Activated naive CD4-positive, alpha-beta T cell treated with anti-CD3 and anti-CD28 coated beads for 36 hours (primary cell): ENCODE measurements at regions of chr11 and their contacts with region 1.

Region 1: DNA sequence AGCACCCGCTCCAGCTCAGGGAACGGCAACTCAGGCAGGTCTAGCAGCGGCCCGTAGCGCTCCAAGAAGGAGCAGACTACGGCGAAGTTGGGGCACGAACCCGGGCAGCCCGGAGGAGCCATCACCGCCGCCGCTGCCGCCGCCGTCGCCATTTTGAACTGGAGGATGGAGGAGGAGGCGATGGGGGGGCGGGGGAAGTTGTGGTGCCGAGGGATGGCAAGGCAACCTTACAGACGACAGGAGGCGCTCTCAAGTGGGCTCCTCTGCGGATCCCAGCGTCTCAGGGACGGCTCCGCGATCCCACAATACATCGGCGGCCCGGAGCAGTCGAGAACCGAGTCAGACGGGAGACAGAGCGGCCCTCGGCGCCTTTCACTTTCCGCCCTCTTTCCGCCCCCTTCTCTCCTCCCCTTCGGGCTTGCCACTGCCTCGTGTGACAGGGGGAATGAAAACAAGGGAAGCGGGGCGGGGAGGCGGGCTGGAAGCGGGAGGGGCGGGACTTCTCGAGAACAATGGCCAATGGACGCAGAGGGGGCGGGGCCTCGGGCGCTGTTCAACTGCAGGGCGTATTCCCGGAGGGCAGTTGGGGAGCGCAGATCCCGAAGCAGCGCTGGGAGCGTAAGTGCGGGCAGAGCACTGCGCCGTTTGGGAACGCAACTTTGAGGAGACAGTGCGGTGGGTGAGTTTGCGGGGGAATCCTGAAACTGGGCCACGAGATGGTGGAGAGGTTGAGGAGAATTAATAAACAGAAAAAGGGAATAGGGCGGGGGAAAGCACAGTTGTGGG is at the starts of genes AAMDC and RSF1:
- DNase-seq: peak; percentile 98
- H3K4me3 Mint-ChIP-seq: peak within 1 kb of the TSS; percentile 98
- H3K27ac Mint-ChIP-seq: peak within 1 kb of the TSS; percentile 97
- H3K4me1 Mint-ChIP-seq: peaks cover 36% of the 10 kb centered on the region
- H3K27me3 Mint-ChIP-seq: no peaks in the 10 kb centered on the region
- total RNA-seq, gene AAMDC: 6.0 to 6.4 TPM
- total RNA-seq, gene RSF1: 50.3 to 54.2 TPM

Region 2: DNA sequence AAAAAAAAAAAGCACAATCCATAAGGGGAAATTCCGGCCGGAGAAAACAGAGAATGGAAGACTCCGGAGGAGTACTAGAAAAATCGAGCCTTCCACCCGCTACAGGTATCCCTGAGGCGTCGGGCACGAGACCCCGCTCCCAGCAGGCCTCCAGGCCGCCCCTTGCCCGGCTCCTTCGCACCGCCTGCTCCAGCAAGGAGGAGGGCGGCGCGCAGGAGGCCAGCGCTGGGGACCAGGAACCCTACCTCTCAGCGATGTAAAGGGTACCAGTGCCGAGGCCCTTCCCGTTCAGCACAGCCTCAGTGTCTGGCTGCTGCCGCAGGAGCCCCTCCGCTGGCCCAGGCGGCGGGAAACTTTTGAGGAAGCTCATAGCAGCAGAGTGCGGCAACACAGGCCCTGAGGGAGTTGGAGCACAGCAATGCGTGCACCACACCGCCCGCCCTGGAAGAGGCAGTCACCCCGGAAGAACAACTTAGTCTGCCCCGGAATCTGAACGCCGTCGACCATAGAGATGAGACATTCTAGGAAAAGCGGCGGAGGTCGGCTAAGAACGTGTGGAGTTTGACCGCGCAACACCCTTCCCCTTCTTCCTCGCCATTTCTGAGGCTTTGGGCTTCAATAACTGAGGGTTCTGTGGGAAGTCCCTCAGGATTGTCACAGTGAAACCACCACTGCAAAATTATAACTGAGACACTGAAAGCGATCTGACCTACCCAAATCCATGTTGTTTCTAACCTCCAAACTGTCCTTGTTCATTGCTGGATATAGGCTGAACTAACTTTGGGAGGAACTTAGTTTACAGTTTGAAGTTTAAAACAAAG is 183.2 kb before region 1 on chr11 and contains the start of gene CLNS1A:
- CTCF ChIA-PET with region 1: no interaction called
- intact Hi-C with region 1: loop called (anchors 1 kb)
- DNase-seq: peak; percentile 90
- H3K4me3 Mint-ChIP-seq: peak within 1 kb of the TSS; percentile 89
- H3K27ac Mint-ChIP-seq: peak within 1 kb of the TSS; percentile 92
- H3K4me1 Mint-ChIP-seq: peaks cover 35% of the 10 kb centered on the region
- H3K27me3 Mint-ChIP-seq: no peaks in the 10 kb centered on the region
- total RNA-seq, gene CLNS1A: 190 to 191 TPM

Region 3: DNA sequence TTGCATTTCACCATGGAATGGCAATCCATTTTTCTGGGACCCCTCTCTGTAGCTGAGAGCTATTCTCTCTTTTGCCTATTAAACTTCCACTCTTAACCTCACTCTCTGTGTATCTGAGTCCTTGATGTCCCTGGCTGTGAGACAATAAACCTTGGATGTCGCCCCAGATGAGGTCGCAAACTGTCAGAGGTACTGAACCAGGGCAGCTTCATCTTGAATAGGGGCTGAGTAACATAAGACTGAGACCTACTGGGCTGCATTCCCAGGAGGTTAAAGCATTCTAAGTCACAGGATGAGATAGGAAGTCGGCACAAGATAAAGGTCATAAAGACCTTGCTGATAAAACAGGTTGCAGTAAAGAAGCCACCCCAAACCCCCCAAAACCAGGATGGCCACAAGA is 68.2 kb before region 1 on chr11:
- CTCF ChIA-PET with region 1: no interaction called
- intact Hi-C with region 1: no loop called
- DNase-seq: no peak
- H3K4me3 Mint-ChIP-seq: no peak overlapping the region
- H3K27ac Mint-ChIP-seq: no peak overlapping the region
- H3K4me1 Mint-ChIP-seq: peaks cover 7% of the 10 kb centered on the region
- H3K27me3 Mint-ChIP-seq: no peaks in the 10 kb centered on the region

Region 4: DNA sequence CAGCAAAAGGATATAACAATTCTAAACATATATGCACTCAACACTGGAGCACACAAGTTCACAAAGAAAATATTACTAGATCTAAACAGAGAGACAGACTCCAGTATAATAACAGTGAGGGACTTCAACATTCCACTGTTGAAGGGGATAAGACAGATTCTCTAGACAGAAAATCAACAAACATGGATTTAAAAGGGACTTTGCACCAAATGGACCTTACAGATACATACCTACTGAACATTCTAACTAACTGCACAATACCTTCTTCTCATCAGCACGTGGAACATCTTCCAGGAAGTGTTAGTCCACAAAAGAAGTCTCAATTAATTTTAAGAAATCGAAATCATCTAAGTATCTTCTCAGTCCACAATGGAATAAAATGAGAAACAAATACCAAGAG is 26.8 kb before region 1 on chr11:
- CTCF ChIA-PET with region 1: no interaction called
- intact Hi-C with region 1: loop called (anchors 2 kb)
- DNase-seq: no peak
- H3K4me3 Mint-ChIP-seq: no peak overlapping the region
- H3K27ac Mint-ChIP-seq: no peak overlapping the region
- H3K4me1 Mint-ChIP-seq: peaks cover 89% of the 10 kb centered on the region
- H3K27me3 Mint-ChIP-seq: no peaks in the 10 kb centered on the region

Region 5: GRCh38 chr11:77851503-77851902 is 30.7 kb after region 1 on chr11:
- CTCF ChIA-PET with region 1: no interaction called
- intact Hi-C with region 1: no loop called
- DNase-seq: no peak
- H3K4me3 Mint-ChIP-seq: no peak overlapping the region
- H3K27ac Mint-ChIP-seq: no peak overlapping the region
- H3K4me1 Mint-ChIP-seq: no peaks in the 10 kb centered on the region
- H3K27me3 Mint-ChIP-seq: no peaks in the 10 kb centered on the region

Region 6: DNA sequence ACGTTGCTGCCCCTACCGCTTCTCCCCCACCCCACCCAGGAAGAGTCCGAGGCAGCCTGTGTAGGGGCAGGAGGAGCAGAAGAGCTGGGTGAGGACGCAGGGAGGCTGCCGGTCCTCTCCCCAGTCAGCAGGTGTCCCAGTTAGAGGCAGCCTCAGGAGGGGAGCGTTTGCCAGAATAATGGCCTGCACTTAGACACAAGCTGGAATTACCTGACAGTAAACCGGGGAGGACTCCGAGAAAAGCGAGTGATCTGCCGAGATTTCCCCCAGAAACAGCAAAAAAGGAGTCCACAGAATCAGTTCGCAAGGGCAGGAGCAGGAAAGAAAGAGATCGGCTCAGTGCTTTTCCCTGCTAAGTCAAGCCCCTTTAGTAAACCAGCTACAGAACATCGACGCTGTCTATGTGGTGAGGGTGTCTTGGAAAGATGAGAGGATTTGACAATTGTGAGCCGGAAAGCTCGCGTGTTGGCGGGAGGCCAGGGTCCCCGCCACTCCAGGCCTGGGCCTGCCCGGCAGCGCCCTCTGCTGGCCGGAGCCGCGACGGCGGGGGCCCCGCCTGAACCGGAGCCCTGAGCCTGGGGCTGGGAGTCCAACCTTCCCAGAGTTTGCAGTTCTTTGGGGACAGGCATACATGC is 225.2 kb after region 1 on chr11:
- CTCF ChIA-PET with region 1: no interaction called
- intact Hi-C with region 1: loop called (anchors 1 kb)
- DNase-seq: peak; percentile 78
- H3K4me3 Mint-ChIP-seq: peak overlapping the region; percentile 39
- H3K27ac Mint-ChIP-seq: no peak overlapping the region
- H3K4me1 Mint-ChIP-seq: peaks cover 9% of the 10 kb centered on the region
- H3K27me3 Mint-ChIP-seq: no peaks in the 10 kb centered on the region

Region 7: GRCh38 chr11:78188286-78189173 is 367.8 kb after region 1 on chr11 and contains the starts of genes KCTD21 and USP35:
- CTCF ChIA-PET with region 1: no interaction called
- intact Hi-C with region 1: loop called (anchors 1 kb)
- DNase-seq: peak; percentile 93
- H3K4me3 Mint-ChIP-seq: peak within 1 kb of the TSS; percentile 99
- H3K27ac Mint-ChIP-seq: peak within 1 kb of the TSS; percentile 99
- H3K4me1 Mint-ChIP-seq: peaks cover 55% of the 10 kb centered on the region
- H3K27me3 Mint-ChIP-seq: no peaks in the 10 kb centered on the region
- total RNA-seq, gene KCTD21: 8.6 to 10.1 TPM
- total RNA-seq, gene USP35: 13.4 to 14.2 TPM